BJ (cell line): ENCODE measurements at regions of chr10 and their contacts with region 1.

Region 1: GRCh38 chr10:15122477-15123030 is 25.4 kb downstream of the RPP38 start:
- DNase-seq: no peak
- H3K4me3 ChIP-seq: no peak overlapping the region
- H3K27me3 ChIP-seq: no peaks in the 10 kb centered on the region
- CTCF ChIP-seq: no peak

Region 2: DNA sequence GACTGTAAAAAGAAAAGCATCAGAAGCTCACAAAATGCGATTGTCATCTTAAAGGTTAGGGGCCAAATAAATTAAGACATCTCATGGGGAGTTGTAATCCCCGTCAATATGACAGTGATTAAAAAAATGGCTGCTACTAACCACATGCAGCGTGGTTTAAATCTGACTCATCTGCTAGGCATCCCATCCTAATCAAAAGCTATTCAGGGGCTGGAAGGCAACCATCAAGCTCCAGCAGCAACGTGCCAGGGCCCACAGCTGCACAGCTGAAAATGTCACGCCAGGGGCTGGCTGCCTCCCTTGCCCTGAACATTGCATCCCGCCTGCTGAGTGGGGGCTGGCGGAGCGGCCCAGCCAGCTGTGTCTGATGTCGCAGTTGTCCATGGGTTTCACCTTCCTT is 725.5 kb before region 1 on chr10:
- CTCF ChIA-PET with region 1: no interaction called
- POLR2A ChIA-PET with region 1: no interaction called
- DNase-seq: peak; percentile 98
- H3K4me3 ChIP-seq: no peak overlapping the region
- H3K27me3 ChIP-seq: peaks cover 24% of the 10 kb centered on the region
- CTCF ChIP-seq: no peak

Region 3: DNA sequence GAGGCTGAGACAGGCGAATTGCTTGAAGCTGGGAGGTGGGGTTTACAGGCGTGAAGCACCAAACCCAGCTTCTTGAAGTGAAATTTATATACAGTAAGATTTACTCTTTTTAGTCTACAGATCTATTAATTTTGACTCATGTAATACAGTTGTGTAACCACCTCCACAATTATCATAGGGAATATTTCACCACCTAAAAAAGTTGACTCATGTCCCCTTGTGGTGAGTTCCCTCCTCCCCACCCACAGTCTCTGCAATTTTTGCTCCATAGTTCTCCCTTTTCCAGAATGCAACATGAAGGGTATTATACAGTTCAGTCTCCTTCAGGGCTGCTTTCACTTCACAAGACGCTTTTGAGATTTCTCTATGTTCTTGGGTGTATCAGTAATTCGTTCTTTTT is 504.7 kb before region 1 on chr10:
- CTCF ChIA-PET with region 1: no interaction called
- POLR2A ChIA-PET with region 1: interaction called, 12 read pairs
- DNase-seq: no peak
- H3K4me3 ChIP-seq: no peak overlapping the region
- H3K27me3 ChIP-seq: no peaks in the 10 kb centered on the region
- CTCF ChIP-seq: peak; percentile 40; the same call in 1 of the 2 replicates

Region 4: GRCh38 chr10:15097011-15097812 is 25.3 kb before region 1 on chr10 and contains the start of gene RPP38:
- CTCF ChIA-PET with region 1: no interaction called
- POLR2A ChIA-PET with region 1: no interaction called
- DNase-seq: peak; percentile 57
- H3K4me3 ChIP-seq: peak within 1 kb of the TSS; percentile 65
- H3K27me3 ChIP-seq: no peaks in the 10 kb centered on the region; the same call in 1 of the 2 replicates
- CTCF ChIP-seq: 0 out of 2 replicates have a peak, but pooled peaks have one; percentile 3
- polyA plus RNA-seq, gene RPP38: 15.9 and 17.2 TPM in 2 replicates

Region 5: GRCh38 chr10:15141136-15142054 is 18.8 kb after region 1 on chr10:
- CTCF ChIA-PET with region 1: no interaction called
- POLR2A ChIA-PET with region 1: no interaction called
- DNase-seq: no peak
- H3K4me3 ChIP-seq: no peak overlapping the region
- H3K27me3 ChIP-seq: no peaks in the 10 kb centered on the region
- CTCF ChIP-seq: no peak

Region 6: DNA sequence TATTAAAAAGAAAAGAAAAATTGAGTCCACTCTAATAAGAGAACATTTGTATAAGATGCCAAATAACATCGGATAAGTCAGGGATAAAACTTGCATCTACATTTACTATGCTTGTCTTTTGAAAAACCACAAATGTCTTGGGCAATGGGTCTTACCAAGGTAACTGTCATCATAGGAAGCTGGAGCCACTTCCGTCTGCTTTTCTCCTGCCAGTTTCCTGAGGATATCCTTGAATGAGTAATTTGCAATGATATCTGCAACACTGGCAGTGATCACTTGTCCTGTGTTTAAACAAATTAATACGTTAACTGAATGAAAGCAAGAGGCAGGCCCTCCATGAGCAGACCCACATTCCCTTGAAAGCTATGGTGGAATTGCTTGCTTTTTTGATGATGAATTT is 549.9 kb after region 1 on chr10:
- CTCF ChIA-PET with region 1: no interaction called
- POLR2A ChIA-PET with region 1: no interaction called
- DNase-seq: no peak
- H3K4me3 ChIP-seq: no peak overlapping the region
- H3K27me3 ChIP-seq: no peaks in the 10 kb centered on the region
- CTCF ChIP-seq: no peak